ENCODE measurements at regions of chr9 and their contacts with region 1.

Region 1: GRCh38 chr9:137029058-137029936 is 1.3 kb upstream of the ABCA2 start:
- DNase-seq: peak; percentile 76
- ATAC-seq: peak; percentile 27
- H3K4me3 Mint-ChIP-seq: peak overlapping the region; percentile 78
- H3K27ac Mint-ChIP-seq: peak overlapping the region; percentile 73
- H3K4me1 Mint-ChIP-seq: peaks cover 67% of the 10 kb centered on the region
- H3K27me3 Mint-ChIP-seq: no peaks in the 10 kb centered on the region
- CTCF ChIP-seq: peak; percentile 36

Region 2: DNA sequence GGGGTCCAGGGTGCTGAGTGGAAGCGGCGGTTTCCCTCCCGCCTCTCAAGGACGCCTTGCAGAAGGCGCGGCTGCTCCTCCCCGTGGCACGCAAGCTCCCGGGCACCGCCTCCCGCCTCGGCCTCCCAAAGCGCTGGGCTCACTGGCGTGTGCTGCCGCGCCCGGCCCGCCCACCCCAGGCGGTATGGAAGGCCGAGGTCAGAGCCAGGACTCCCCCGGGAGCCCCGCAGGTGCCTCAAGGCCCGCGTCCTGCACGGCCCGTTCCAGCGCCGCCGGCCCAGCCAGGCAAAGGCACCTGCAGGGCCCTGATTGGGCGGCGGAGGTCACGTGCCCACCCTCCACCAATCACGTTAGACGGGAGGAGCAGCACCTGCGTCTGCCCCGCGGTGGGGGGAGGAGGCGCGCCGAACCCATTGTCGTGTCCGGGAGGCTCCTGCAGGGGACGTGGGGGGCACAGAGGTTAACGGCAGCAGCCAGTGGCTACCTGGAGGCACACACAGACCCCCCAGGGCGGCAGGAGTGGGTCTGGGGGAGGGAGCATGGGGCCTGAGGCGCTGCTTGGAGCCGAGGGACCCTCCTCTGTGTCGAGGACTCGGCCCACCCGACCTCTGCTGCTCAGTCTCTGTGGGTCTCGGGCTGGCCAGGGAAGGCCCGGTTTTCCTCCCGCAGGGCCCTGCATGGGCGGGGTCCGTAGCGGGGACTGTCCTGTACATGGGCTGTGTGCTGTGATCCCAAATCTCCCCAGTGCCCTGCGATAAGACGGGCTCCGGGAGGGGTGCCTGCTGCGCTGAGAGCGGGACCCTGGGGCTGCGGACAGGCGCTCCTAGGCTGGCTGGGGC is 79.3 kb before region 1 on chr9:
- CTCF ChIA-PET with region 1: interaction called, 39 read pairs
- POLR2A ChIA-PET with region 1: interaction called, 8 read pairs
- intact Hi-C with region 1: no loop called
- DNase-seq: peak; percentile 94
- ATAC-seq: peak; percentile 96
- H3K4me3 Mint-ChIP-seq: peak overlapping the region; percentile 82
- H3K27ac Mint-ChIP-seq: peak overlapping the region; percentile 86
- H3K4me1 Mint-ChIP-seq: peaks cover 5% of the 10 kb centered on the region
- H3K27me3 Mint-ChIP-seq: no peaks in the 10 kb centered on the region
- CTCF ChIP-seq: no peak

Region 3: DNA sequence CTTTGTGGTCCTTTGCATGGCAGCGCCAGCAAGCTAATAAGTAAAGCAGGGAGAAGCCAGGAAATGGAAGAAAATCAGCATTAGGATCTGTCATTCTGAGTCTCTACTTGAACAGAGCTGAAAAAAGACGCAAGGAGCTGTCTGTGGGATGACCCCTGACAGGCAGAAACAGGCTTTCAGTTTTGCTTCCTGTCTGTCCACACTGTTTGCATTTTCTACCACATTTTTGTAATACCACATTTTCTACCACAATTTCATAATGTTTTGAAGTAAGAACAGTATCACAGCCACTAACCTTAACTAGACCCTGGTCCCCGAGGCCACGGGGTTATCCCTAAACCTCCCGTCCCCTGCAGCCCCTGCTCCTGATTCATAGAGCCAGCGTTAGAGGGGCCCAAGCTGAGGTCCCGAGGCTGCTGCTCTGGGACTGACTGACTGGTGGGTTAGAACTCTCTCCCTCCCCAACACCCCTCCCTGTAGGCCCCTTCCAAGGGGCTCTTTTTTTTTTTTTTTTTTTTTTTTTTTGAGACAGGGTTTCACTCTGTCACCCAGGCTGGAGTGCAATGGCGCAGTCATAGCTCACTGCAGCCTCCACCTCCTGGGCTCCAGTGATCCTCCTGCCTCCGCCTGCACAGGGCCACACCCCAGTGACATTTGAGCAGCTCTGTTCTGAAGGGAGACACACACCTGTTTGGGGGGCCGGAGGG is 29.0 kb before region 1 on chr9:
- CTCF ChIA-PET with region 1: interaction called, 11 read pairs
- POLR2A ChIA-PET with region 1: interaction called, 3 read pairs
- intact Hi-C with region 1: loop called (anchors 1 kb)
- DNase-seq: no peak
- ATAC-seq: peak; percentile 69
- H3K4me3 Mint-ChIP-seq: peak overlapping the region; percentile 75
- H3K27ac Mint-ChIP-seq: peak overlapping the region; percentile 83
- H3K4me1 Mint-ChIP-seq: peaks cover 55% of the 10 kb centered on the region
- H3K27me3 Mint-ChIP-seq: no peaks in the 10 kb centered on the region
- CTCF ChIP-seq: no peak

Region 4: DNA sequence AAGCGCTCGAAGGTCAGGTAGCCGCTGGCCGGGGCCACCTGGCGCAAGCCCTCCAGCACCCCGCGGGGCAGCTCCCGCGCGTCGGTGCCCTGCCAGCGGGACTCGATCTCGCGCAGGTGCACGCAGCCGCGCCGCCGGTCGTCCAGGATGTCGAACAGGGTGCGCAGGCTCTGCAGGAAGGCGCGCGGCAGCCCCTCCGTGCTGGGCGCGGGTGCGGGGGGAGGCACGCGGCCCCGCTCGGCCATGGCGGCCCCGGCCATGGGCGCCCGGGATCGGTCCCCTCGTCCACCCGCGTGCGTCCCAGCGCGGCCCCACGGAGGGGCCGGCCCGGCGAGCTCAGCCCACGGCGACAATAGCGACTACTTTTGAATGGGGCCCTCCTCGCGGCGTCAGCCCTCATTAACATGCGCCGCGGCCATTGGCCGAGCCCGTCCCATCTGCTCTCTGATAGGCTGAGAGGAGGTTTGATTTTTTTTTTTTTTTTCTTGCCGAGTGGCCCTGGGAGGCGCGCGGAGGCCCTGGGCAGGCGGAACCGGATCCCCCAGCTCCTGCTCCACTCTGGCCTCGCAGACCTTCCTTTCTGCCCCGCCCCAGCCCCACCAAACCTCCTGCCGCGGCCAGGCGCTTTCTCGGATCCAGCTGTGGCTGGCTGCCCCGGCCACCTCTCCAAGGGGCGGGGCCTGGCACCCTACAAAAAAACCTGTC is 41.1 kb after region 1 on chr9 and contains the start of gene SAPCD2:
- CTCF ChIA-PET with region 1: interaction called, 8 read pairs
- POLR2A ChIA-PET with region 1: interaction called, 3 read pairs
- intact Hi-C with region 1: loop called (anchors 5 kb)
- DNase-seq: peak; percentile 80
- ATAC-seq: peak; percentile 83
- H3K4me3 Mint-ChIP-seq: peak within 1 kb of the TSS; percentile 72
- H3K27ac Mint-ChIP-seq: peak within 1 kb of the TSS; percentile 41
- H3K4me1 Mint-ChIP-seq: peaks cover 24% of the 10 kb centered on the region
- H3K27me3 Mint-ChIP-seq: peaks cover 4% of the 10 kb centered on the region
- CTCF ChIP-seq: no peak
- total RNA-seq, gene SAPCD2: 0.80 and 0.81 TPM in 2 replicates

Measured in activated B cell treated with CpG ODN at 0.5 μM for 24 hours (primary cell).